Psoas muscle (tissue), 8 donors: ENCODE measurements at regions of chr15 and their contacts with region 1.

Region 1: GRCh38 chr15:40323239-40323952 is at the start of gene INAFM2:
- DNase-seq: peak; percentile 92 to 96
- ATAC-seq: peak; percentile 89 to 94 (median 92)
- H3K4me3 ChIP-seq: peak within 1 kb of the TSS; percentile 86
- H3K27ac ChIP-seq: peak within 1 kb of the TSS; percentile 86
- H3K4me1 ChIP-seq: peaks cover 27% of the 10 kb centered on the region
- H3K27me3 ChIP-seq: no peaks in the 10 kb centered on the region
- CTCF ChIP-seq: peak; percentile 68
- total RNA-seq, gene INAFM2: 22.3 to 32.4 (median 28.9) TPM

Region 2: GRCh38 chr15:40367686-40368611 is 44.6 kb after region 1 on chr15:
- intact Hi-C with region 1: loop called in 1 of 2 experiments (anchors 1 kb)
- DNase-seq: peak; percentile 85 to 93
- ATAC-seq: peak; percentile 79 to 86 (median 84)
- H3K4me3 ChIP-seq: peak overlapping the region; percentile 55
- H3K27ac ChIP-seq: peak overlapping the region; percentile 81
- H3K4me1 ChIP-seq: peaks cover 18% of the 10 kb centered on the region
- H3K27me3 ChIP-seq: no peaks in the 10 kb centered on the region
- CTCF ChIP-seq: peak; percentile 85

Region 3: DNA sequence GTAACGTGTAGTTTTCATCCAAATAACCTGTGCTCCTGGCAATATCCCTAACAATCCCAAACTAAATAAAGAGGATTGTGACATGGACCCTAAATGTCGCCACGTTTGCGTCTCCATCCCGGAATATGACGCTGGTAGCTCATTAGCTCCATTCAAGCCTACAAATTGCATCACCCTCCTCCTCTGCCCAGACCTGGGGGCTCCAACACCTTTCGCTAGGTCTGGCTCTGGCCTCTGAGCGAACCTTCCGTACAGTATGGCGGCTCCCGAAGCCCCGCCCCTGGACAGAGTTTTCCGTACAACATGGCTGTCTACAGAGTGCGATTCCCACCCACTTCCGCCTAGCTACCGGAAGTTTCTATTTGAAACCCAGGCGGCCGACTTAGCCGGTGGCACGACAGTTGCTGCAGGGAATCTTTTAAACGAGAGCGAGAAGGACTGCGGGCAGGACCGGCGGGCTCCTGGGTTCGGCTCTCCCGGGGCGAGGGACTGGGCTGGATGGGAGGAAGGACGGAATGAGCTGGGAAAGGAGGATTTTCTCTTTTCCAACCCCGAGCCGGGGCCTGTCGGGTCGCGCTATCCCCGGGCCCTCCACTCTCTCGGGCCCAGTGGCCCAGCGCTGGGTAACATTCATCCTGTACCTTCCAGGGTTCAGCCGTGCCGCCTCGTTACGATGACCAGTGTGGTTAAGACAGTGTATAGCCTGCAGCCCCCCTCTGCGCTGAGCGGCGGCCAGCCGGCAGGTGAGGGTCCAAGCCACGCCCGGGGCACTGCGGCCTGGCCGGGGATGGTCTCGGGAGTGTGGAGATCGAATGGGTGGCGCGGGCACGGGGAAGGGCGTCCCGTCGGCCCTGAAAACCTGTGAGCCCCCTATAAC is 59.4 kb after region 1 on chr15 and contains the start of gene KNSTRN:
- intact Hi-C with region 1: no loop called
- DNase-seq: peak; percentile 89 to 94
- ATAC-seq: peak; percentile 88 to 92 (median 90)
- H3K4me3 ChIP-seq: peak within 1 kb of the TSS; percentile 92
- H3K27ac ChIP-seq: peak within 1 kb of the TSS; percentile 61
- H3K4me1 ChIP-seq: peaks cover 25% of the 10 kb centered on the region
- H3K27me3 ChIP-seq: no peaks in the 10 kb centered on the region
- CTCF ChIP-seq: no peak
- total RNA-seq, gene KNSTRN: 7.7 to 21.3 (median 11.6) TPM